ENCODE measurements at regions of chr17 and their contacts with region 1.

Region 1: GRCh38 chr17:77542551-77543490 is 402.1 kb downstream of the SEC14L1 start:
- DNase-seq: peak; percentile 40
- H3K4me3 ChIP-seq: no peak overlapping the region
- CTCF ChIP-seq: peak; percentile 88

Region 2: GRCh38 chr17:77465358-77466041 is 77.3 kb before region 1 on chr17:
- CTCF ChIA-PET with region 1: no interaction called
- POLR2A ChIA-PET with region 1: no interaction called
- DNase-seq: no peak
- H3K4me3 ChIP-seq: no peak overlapping the region
- CTCF ChIP-seq: no peak

Region 3: DNA sequence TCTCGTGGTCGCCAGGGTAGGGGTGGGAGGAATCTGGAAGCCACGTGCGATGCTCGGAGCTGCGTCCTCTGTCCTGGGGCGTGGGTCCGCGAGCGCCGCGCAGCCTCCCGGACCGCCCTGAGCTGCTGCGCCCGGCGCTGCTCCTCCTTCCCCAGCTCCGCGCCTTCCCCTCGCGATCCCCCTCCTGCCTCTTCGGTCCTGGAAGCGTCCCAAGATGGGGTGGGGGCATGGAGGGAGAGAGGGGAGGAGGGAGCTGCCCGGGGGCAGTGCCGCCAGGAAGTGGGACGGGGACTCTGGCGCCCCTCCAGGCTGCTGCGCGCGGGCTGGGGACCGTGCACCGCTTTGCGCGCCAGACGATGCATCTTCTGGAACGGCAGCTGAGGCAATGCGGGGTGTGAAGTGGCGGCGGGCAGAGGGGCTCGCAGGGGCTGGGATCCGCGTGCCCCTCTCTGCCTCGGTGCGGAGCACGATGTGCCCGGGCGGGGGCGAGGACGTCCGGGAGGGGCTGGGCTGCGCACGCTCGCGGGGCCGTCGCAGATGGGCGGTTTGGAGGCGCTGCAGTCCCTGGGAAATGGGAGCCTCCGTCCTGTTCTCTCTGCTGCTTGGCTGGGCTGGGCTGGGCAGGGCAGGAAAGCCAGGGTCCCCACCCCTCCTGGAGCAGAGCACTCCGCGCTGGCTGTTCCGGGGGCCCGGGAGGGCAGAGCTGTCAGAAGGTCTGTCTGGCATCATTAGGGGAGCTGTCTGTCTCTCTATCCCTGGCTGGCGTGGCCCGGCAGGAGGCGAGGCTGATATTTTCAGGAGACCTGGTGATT is 14.1 kb before region 1 on chr17:
- CTCF ChIA-PET with region 1: interaction called, 10 read pairs
- POLR2A ChIA-PET with region 1: no interaction called
- DNase-seq: no peak
- H3K4me3 ChIP-seq: peak overlapping the region; percentile 51
- CTCF ChIP-seq: no peak

Region 4: DNA sequence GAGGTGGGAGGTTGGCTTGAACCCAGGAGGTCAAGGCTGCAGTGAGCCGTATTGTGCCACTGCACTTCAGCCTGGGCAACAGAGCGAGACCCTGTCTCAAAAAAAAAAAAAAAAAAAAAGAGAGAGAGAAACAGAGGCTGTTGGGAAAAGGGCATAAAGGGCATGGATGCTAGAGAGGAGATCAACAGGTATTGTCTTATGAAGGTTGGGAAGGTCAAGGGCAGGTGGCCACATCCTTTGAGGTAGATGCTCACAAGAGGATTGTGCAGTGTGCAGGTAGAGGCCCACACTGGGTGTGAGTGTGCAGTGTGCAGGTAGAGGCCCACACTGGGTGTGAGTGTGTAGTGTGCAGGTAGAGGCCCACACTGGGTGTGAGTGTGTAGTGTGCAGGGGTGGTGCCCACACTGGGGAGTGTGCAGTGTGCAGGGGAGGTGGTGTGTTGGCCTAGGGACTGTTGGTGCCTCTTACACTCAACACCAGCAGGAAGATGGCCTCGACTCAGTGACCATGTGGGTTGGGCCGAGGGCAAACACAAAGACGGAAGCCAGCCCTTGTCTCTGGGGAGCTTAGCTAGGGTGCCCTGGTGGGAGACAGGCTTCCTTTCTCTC is 10.7 kb after region 1 on chr17:
- CTCF ChIA-PET with region 1: interaction called, 17 read pairs
- POLR2A ChIA-PET with region 1: no interaction called
- DNase-seq: no peak
- H3K4me3 ChIP-seq: no peak overlapping the region
- CTCF ChIP-seq: no peak

Region 5: GRCh38 chr17:77590951-77591735 is 48.3 kb after region 1 on chr17:
- CTCF ChIA-PET with region 1: no interaction called
- POLR2A ChIA-PET with region 1: no interaction called
- DNase-seq: no peak
- H3K4me3 ChIP-seq: no peak overlapping the region
- CTCF ChIP-seq: no peak

Region 6: DNA sequence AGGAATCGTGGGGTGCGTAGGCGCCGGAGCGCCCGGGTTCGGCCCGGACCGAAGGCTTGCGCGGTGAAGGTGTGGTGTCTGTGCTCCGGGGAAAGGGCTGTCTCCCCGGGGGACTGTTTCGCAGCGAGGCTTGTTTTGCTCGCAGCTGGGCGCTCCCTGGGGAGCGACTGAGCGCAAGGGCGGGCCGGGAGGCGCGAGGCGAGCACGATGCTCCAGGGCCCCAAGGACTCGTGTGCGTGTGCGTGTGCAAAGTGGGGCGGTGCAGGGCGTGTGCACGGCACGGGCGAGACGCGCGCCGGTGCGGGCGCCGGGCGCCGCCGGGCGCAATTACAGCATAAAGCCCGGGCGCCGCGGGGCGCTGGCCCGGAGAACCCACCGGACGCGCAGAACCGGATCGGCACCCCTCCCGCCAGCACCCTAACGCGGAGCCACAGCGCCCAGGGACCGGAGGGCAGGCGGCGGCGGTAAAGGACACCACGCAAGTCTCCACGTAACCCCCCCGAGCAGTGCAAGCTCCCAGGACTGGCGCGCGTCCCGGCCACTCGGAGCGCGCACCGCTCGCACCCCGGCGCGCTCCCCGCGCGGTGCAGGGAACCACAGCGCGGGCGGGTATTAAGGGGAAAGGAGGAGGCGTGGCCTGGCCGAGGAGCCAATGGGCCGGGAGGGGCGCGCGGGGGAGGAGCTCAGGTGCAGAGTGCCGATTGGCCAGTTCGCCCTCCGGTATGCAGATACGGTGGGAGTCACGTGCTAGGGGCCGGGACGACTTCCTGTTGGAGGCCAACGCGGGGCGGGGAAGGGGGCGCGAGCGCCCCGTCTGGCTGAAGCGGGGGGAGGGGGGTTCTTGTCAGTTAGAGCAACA is 415.3 kb after region 1 on chr17 and contains the start of gene TNRC6C:
- CTCF ChIA-PET with region 1: interaction called, 3 read pairs
- POLR2A ChIA-PET with region 1: interaction called, 11 read pairs
- DNase-seq: peak; percentile 88
- H3K4me3 ChIP-seq: peak within 1 kb of the TSS; percentile 76
- CTCF ChIP-seq: peak; percentile 23

Region 7: GRCh38 chr17:78005452-78006171 is 462.8 kb after region 1 on chr17:
- CTCF ChIA-PET with region 1: interaction called, 29 read pairs
- POLR2A ChIA-PET with region 1: no interaction called
- DNase-seq: no peak
- H3K4me3 ChIP-seq: no peak overlapping the region
- CTCF ChIP-seq: no peak